Activated B cell treated with CpG ODN at 0.5 μM for 24 hours (primary cell): ENCODE measurements at regions of chr13 and their contacts with region 1.

Region 1: DNA sequence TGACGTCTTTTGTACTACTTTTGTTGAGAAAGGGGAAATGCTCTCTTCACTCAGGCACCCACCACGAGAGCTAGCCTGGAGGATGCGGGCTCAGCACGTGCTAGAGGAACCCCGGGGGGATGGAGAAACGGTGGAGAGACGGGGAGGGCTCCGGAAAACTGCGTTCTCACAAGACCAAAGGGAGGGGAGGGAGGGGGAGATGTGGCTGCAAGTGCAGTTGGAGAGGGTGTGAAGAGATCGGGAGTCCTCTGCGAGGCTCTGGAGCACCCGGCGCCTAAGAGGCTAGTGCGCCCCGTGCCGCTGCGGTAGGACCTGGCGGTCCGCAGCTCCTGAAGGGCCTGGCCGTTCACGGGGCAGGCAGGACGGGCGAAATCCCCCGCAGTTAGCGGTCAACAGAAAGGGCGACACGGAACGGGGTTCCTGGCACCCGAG is 43.4 kb upstream of the XPO4 start:
- DNase-seq: no peak
- ATAC-seq: no peak
- H3K4me3 Mint-ChIP-seq: peak overlapping the region; percentile 28
- H3K27ac Mint-ChIP-seq: no peak overlapping the region
- H3K4me1 Mint-ChIP-seq: peaks cover 6% of the 10 kb centered on the region
- H3K27me3 Mint-ChIP-seq: peaks cover 37% of the 10 kb centered on the region
- CTCF ChIP-seq: no peak

Region 2: DNA sequence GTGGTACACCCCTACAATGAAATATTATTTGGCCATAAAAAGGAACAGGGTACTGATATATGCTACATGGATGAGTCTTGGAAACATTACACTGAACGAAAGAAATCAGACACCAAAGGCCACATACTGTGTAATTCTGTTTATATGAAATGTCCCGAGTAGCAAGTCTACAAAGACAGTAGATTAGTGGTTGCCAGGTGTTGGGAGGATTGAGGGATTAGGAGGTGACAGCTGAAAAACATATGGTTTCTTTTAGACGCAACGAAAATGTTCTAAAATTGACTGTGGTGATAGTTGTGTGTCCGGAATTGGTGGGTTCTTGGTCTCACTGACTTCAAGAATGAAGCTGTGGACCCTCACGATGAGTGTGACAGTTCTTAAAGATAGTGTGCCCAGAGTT is 207.4 kb before region 1 on chr13:
- CTCF ChIA-PET with region 1: no interaction called
- POLR2A ChIA-PET with region 1: no interaction called
- intact Hi-C with region 1: no loop called
- DNase-seq: no peak
- ATAC-seq: no peak
- H3K4me3 Mint-ChIP-seq: no peak overlapping the region
- H3K27ac Mint-ChIP-seq: no peak overlapping the region
- H3K4me1 Mint-ChIP-seq: no peaks in the 10 kb centered on the region
- H3K27me3 Mint-ChIP-seq: no peaks in the 10 kb centered on the region
- CTCF ChIP-seq: no peak

Region 3: DNA sequence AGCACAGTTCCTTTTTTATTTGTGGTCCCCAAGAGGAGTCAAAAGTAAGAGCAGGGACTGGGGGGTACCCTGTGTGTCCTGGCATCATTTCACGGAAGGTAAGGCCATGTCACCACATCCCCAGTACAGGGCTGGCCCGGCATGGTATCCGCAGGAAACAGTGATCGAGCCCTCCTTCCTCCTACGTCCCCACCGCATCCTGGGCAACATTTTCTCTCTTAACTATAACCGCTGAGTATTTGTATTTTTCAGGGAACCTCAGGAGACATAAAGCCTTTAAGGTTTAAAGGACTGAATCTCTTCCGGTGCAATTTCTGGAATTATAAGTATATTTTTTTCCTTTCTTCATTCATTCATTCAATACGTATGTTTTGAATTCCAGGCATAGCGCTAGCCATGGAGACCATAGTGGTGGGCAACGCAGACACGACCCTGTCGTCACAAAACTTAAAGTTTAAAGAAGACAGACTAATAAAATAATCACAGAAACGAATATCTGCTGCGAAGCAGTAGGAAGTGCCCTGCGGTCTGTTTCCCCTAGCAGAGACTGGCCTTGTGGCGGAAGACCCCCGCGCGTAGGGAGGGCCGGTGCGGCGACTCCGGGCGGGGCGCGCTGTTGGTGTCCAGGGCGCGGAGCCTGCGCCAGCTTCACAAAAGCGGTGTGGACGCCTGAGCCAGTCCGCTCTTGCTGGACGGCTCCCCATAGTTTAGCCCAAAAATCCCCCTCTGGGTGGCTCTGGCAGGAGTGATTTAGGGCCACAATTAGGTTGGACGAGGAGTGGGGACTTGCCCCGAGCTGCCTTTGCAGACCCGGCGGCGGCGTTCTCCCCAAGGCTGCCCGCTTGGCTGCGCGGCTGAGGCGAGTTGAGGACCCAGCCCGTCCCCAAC is 129.3 kb after region 1 on chr13:
- CTCF ChIA-PET with region 1: no interaction called
- POLR2A ChIA-PET with region 1: no interaction called
- intact Hi-C with region 1: loop called (anchors 10 kb)
- DNase-seq: peak; percentile 18
- ATAC-seq: peak; percentile 66
- H3K4me3 Mint-ChIP-seq: peak overlapping the region; percentile 74
- H3K27ac Mint-ChIP-seq: no peak overlapping the region
- H3K4me1 Mint-ChIP-seq: peaks cover 16% of the 10 kb centered on the region
- H3K27me3 Mint-ChIP-seq: peaks cover 38% of the 10 kb centered on the region
- CTCF ChIP-seq: no peak

Region 4: DNA sequence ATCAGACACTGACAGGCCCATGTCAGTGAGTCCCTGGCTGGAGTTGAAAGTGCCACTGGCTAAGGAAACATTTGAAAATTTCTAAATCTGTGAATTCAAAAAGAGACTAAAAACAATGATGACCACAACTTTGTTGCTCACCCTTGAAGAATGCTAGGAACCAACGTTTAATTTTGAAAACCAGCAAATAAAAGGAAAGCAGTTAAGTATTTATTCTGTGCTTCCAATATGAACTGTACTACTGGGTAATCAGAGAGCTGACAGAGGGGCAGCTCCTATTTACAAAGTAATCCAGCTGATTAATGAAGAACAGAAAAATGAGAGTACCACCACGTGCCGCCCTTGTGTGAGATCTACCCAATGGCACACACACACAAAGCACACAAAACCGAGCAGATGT is 160.1 kb after region 1 on chr13:
- CTCF ChIA-PET with region 1: no interaction called
- POLR2A ChIA-PET with region 1: no interaction called
- intact Hi-C with region 1: loop called (anchors 1 kb)
- DNase-seq: no peak
- ATAC-seq: no peak
- H3K4me3 Mint-ChIP-seq: no peak overlapping the region
- H3K27ac Mint-ChIP-seq: no peak overlapping the region
- H3K4me1 Mint-ChIP-seq: no peaks in the 10 kb centered on the region
- H3K27me3 Mint-ChIP-seq: no peaks in the 10 kb centered on the region
- CTCF ChIP-seq: no peak